Naive thymus-derived CD8-positive, alpha-beta T cell (primary cell): ENCODE measurements at regions of chr21 and their contacts with region 1.

Region 1: DNA sequence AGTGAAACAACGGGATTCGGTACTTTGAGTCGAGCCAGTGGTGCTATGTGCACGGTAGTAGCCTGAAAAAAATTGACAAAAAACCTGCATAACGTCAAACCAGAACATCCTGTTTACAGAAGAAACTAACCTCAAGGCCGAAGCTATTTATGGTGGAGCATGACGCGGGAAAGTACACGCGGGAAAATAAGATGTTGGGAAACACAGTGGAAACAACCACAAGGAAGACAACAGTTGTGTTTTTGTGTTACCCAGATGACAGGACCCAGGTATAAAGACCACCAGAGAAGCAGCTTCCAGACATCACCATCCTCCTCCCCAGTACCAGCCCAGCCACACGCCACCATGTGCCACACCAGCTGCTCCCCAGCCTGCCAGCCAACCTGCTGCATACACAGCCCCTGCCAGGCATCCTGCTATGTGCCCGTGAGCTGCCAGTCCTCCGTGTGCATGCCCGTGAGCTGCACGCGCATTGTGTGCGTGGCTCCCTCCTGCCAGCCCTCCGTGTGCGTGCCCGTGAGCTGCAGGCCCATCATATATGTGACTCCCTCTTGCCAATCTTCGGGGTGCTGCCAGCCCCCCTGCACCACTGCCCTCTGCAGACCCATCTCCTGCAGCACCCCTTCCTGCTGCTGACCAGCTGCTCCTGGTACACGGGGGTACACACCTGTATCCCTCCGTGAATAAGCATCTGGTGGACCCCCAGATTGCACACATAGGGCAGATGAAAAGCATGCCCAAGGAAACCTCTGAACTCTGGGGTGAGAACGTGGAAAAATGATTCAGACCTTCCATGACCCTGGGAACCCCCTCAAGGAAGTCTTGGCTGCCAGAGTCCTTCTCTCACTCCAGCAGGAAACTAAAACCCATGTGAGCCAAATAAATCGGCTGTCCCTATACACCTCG is at the start of gene KRTAP12-3:
- DNase-seq: peak; percentile 48 to 93 (median 78)
- ATAC-seq: peak; percentile 63 to 74
- H3K4me3 Mint-ChIP-seq: peak within 1 kb of the TSS; percentile 48 to 87 (median 82)
- H3K27ac Mint-ChIP-seq: peak within 1 kb of the TSS; percentile 91 to 99 (median 97)
- H3K4me1 Mint-ChIP-seq: peaks cover 38 to 71% (median 68%) of the 10 kb centered on the region in 4 donors
- H3K27me3 Mint-ChIP-seq: peaks cover 0 to 3% (median 0%) of the 10 kb centered on the region in 5 donors
- polyA plus RNA-seq, gene KRTAP12-3: not detected

Region 2: GRCh38 chr21:44547656-44548331 is 110.1 kb before region 1 on chr21:
- POLR2A ChIA-PET with region 1: interaction called, 15 read pairs
- DNase-seq: peak in 9 of 10 donors; percentile 23 to 73 (median 48)
- ATAC-seq: peak; percentile 93 to 98
- H3K4me3 Mint-ChIP-seq: peak overlapping the region; percentile 75 to 90 (median 82)
- H3K27ac Mint-ChIP-seq: peak overlapping the region; percentile 88 to 98 (median 96)
- H3K4me1 Mint-ChIP-seq: peaks cover 25 to 36% (median 31%) of the 10 kb centered on the region in 4 donors
- H3K27me3 Mint-ChIP-seq: no peaks in the 10 kb centered on the region

Region 3: GRCh38 chr21:44618504-44618903 is 39.4 kb before region 1 on chr21:
- POLR2A ChIA-PET with region 1: interaction called, 19 read pairs
- DNase-seq: no peak
- ATAC-seq: peak; percentile 52 to 53
- H3K4me3 Mint-ChIP-seq: peak overlapping the region; percentile 56 to 87 (median 72)
- H3K27ac Mint-ChIP-seq: peak overlapping the region; percentile 93 to 98 (median 94)
- H3K4me1 Mint-ChIP-seq: peaks cover 34 to 59% (median 55%) of the 10 kb centered on the region in 4 donors
- H3K27me3 Mint-ChIP-seq: no peaks in the 10 kb centered on the region

Region 4: GRCh38 chr21:44626262-44626661 is 31.6 kb before region 1 on chr21:
- POLR2A ChIA-PET with region 1: interaction called, 15 read pairs
- DNase-seq: peak in 3 of 10 donors; percentile 18 to 32 (median 32)
- ATAC-seq: no peak
- H3K4me3 Mint-ChIP-seq: peak overlapping the region in 4 of 10 donors; percentile 28 to 65 (median 58)
- H3K27ac Mint-ChIP-seq: peak overlapping the region in 6 of 10 donors; percentile 43 to 75 (median 58)
- H3K4me1 Mint-ChIP-seq: peaks cover 21 to 52% (median 43%) of the 10 kb centered on the region in 4 donors
- H3K27me3 Mint-ChIP-seq: peaks cover 0 to 2% (median 0%) of the 10 kb centered on the region in 5 donors